Naive thymus-derived CD4-positive, alpha-beta T cell (primary cell): ENCODE measurements at regions of chr6 and their contacts with region 1.

Region 1: GRCh38 chr6:151390276-151391032 is 905 bp downstream of the ZBTB2 start:
- DNase-seq: peak; percentile 97 to 100 (median 99)
- ATAC-seq: peak; percentile 88
- H3K4me3 ChIP-seq: peak overlapping the region; percentile 60
- H3K4me3 Mint-ChIP-seq: peak overlapping the region; percentile 68 to 99 (median 94)
- H3K27ac ChIP-seq: peak overlapping the region; percentile 96
- H3K27ac Mint-ChIP-seq: peak overlapping the region; percentile 51 to 98 (median 94)
- H3K4me1 ChIP-seq: peaks cover 44 to 45% of the 10 kb centered on the region in 2 donors
- H3K4me1 Mint-ChIP-seq: peaks cover 39 to 74% (median 67%) of the 10 kb centered on the region in 7 donors
- H3K27me3 ChIP-seq: no peaks in the 10 kb centered on the region
- H3K27me3 Mint-ChIP-seq: peaks cover 0 to 4% (median 0%) of the 10 kb centered on the region in 5 donors

Region 2: DNA sequence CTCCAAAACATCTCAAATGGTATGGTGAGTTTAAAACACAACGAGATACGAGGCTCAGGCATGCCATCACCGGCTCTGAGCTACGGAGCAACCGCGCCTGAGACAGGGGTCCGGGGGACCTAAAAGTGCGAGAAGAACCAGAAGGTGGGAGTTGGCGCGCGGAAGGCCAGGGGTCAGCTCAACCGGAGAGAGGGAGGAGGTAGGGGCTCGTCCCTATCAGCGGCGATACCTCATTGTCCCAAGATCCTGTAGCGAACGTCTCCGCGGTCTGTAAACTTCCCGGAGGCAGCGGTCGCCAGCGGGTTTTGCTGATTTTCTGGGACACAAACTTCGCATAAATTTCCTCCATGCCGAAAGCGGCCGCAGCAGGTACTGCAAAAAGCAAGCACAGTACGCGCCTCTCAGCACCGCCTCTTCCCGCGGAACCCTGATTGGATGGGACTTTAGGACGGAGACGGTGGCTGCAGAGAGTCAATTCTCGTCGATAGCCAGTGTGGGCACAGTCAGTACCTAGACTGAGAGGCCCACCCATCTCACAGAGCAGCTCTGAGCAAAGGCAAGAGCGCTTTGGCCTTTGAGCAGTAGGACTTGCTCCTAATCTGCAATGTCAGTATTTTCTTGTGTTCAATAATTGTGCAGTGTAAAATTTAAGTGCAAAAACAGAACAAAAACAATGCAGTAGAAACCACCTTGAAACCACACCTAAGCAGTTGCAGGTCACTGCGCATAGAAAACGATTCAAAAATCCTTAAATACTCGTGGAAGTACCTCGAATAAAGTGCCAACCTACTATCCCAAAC is 1644.1 kb before region 1 on chr6 and contains the start of gene NUP43:
- CTCF ChIA-PET with region 1: no interaction called
- POLR2A ChIA-PET with region 1: no interaction called
- intact Hi-C with region 1: loop called in 1 of 2 experiments (anchors 2 kb)
- DNase-seq: peak; percentile 75 to 91 (median 90)
- ATAC-seq: peak; percentile 80
- H3K4me3 ChIP-seq: peak within 1 kb of the TSS; percentile 77
- H3K4me3 Mint-ChIP-seq: peak within 1 kb of the TSS; percentile 93 to 99 (median 97)
- H3K27ac ChIP-seq: peak within 1 kb of the TSS; percentile 82
- H3K27ac Mint-ChIP-seq: peak within 1 kb of the TSS; percentile 86 to 97 (median 95)
- H3K4me1 ChIP-seq: peaks cover 17 to 26% of the 10 kb centered on the region in 2 donors
- H3K4me1 Mint-ChIP-seq: peaks cover 14 to 46% (median 32%) of the 10 kb centered on the region in 7 donors
- H3K27me3 ChIP-seq: no peaks in the 10 kb centered on the region
- H3K27me3 Mint-ChIP-seq: no peaks in the 10 kb centered on the region
- total RNA-seq, gene NUP43: 14.0 to 70.7 (median 60.2) TPM

Region 3: GRCh38 chr6:151352410-151353396 is 37.8 kb before region 1 on chr6:
- CTCF ChIA-PET with region 1: no interaction called
- POLR2A ChIA-PET with region 1: interaction called, 19 read pairs
- intact Hi-C with region 1: loop called in 1 of 2 experiments (anchors 1 kb)
- DNase-seq: no peak
- ATAC-seq: peak; percentile 40
- H3K4me3 ChIP-seq: no peak overlapping the region
- H3K4me3 Mint-ChIP-seq: no peak overlapping the region
- H3K27ac ChIP-seq: no peak overlapping the region
- H3K27ac Mint-ChIP-seq: no peak overlapping the region
- H3K4me1 ChIP-seq: no peaks in the 10 kb centered on the region
- H3K4me1 Mint-ChIP-seq: peaks cover 0 to 6% (median 2%) of the 10 kb centered on the region in 7 donors
- H3K27me3 ChIP-seq: no peaks in the 10 kb centered on the region
- H3K27me3 Mint-ChIP-seq: no peaks in the 10 kb centered on the region

Region 4: GRCh38 chr6:151379933-151380847 is 10.3 kb before region 1 on chr6:
- CTCF ChIA-PET with region 1: interaction called, 3 read pairs
- POLR2A ChIA-PET with region 1: interaction called, 41 read pairs
- intact Hi-C with region 1: loop called (anchors 1 kb)
- DNase-seq: peak in 7 of 9 donors; percentile 14 to 50 (median 37)
- ATAC-seq: peak; percentile 84
- H3K4me3 ChIP-seq: peak overlapping the region; percentile 51
- H3K4me3 Mint-ChIP-seq: peak overlapping the region; percentile 82 to 91 (median 86)
- H3K27ac ChIP-seq: peak overlapping the region; percentile 70
- H3K27ac Mint-ChIP-seq: peak overlapping the region; percentile 87 to 97 (median 95)
- H3K4me1 ChIP-seq: peaks cover 28 to 47% of the 10 kb centered on the region in 2 donors
- H3K4me1 Mint-ChIP-seq: peaks cover 49 to 81% (median 72%) of the 10 kb centered on the region in 7 donors
- H3K27me3 ChIP-seq: no peaks in the 10 kb centered on the region
- H3K27me3 Mint-ChIP-seq: no peaks in the 10 kb centered on the region

Region 5: DNA sequence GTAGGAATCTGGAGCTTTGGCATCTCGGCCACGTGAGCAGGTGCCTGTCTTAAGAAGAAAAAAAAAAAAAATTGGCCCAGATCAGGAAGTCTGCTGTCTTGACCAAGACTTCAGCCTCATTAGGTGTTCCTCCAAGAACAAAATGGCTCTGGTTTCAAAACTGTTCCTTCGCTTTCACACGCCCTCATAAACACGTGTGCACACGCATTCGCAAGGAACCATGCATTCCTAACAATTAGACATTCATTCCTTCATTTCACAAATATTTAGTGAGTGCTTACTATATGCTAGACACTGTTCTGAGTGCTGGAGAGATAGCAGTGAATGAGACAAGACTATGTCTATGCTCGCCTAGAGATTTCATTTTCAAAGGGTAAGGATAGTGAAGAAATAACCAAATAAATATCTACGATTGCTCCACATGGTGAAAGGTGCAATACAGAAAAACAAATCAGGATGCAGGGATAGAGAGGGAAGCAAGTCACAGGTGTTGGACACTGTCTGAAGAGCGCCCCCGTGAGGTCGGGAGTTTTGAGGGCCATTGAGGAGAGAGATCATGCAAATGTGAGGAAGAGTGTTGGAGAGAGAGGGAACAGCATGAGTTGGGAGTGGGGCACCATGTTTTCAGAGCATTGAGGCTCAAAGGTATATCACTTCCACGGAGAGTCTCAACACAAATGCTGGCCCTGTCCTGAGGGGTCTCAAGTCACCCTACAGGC is 156.6 kb after region 1 on chr6:
- CTCF ChIA-PET with region 1: no interaction called
- POLR2A ChIA-PET with region 1: no interaction called
- intact Hi-C with region 1: no loop called
- DNase-seq: no peak
- ATAC-seq: no peak
- H3K4me3 ChIP-seq: no peak overlapping the region
- H3K4me3 Mint-ChIP-seq: no peak overlapping the region
- H3K27ac ChIP-seq: no peak overlapping the region
- H3K27ac Mint-ChIP-seq: no peak overlapping the region
- H3K4me1 ChIP-seq: no peaks in the 10 kb centered on the region
- H3K4me1 Mint-ChIP-seq: peaks cover 0 to 3% (median 0%) of the 10 kb centered on the region in 7 donors
- H3K27me3 ChIP-seq: no peaks in the 10 kb centered on the region
- H3K27me3 Mint-ChIP-seq: peaks cover 0 to 20% (median 10%) of the 10 kb centered on the region in 5 donors

Region 6: GRCh38 chr6:152184917-152185574 is 794.6 kb after region 1 on chr6:
- CTCF ChIA-PET with region 1: no interaction called
- POLR2A ChIA-PET with region 1: interaction called, 23 read pairs
- intact Hi-C with region 1: loop called (anchors 1 to 10 kb)
- DNase-seq: peak in 7 of 9 donors; percentile 25 to 78 (median 66)
- ATAC-seq: peak; percentile 77
- H3K4me3 ChIP-seq: peak overlapping the region; percentile 56
- H3K4me3 Mint-ChIP-seq: peak overlapping the region; percentile 87 to 99 (median 96)
- H3K27ac ChIP-seq: peak overlapping the region; percentile 71
- H3K27ac Mint-ChIP-seq: peak overlapping the region; percentile 95 to 100 (median 99)
- H3K4me1 ChIP-seq: peaks cover 37 to 48% of the 10 kb centered on the region in 2 donors
- H3K4me1 Mint-ChIP-seq: peaks cover 46 to 92% (median 75%) of the 10 kb centered on the region in 7 donors
- H3K27me3 ChIP-seq: no peaks in the 10 kb centered on the region
- H3K27me3 Mint-ChIP-seq: no peaks in the 10 kb centered on the region

Region 7: DNA sequence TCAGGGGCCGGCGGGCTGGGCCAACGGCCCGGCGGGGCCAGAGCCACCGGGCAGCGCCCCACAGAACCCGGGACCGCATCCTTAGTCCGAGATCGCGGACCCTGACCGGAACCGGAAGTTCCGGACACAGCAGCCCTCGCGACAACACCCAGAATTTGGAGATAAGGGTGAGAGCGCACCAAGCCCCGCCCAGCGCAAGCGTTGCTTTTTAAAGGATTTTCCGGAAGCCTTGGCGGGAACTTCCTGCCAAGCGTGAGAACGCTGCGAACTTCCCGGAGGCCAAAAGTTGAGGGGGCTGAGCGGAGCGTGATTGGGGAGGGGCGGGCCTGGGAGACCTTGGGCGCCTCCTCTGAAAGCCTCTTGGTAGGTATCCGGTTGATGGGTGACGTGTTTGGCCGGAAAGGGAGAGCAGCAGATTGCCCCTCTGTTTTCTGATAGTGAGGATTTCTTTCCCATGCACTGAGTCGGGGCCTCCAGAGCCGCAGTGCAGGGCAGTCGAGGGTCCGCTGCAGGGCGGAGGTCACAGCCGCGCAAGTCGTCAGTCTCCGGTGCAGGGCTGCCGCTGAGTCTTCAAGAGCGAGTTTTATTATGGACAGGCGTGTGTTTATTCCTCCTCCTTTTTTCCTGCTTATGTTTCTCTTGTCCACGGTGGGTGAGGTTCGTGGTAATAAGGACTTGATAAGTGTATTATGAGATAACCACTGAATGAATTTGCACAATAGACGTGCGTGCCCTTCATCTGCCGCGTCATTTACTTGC is 1612.3 kb after region 1 on chr6 and contains the start of gene MTRF1L:
- CTCF ChIA-PET with region 1: no interaction called
- POLR2A ChIA-PET with region 1: no interaction called
- intact Hi-C with region 1: loop called (anchors 5 kb)
- DNase-seq: peak; percentile 52 to 84 (median 70)
- ATAC-seq: peak; percentile 92
- H3K4me3 ChIP-seq: peak within 1 kb of the TSS; percentile 63
- H3K4me3 Mint-ChIP-seq: peak within 1 kb of the TSS; percentile 85 to 99 (median 96)
- H3K27ac ChIP-seq: peak within 1 kb of the TSS; percentile 73
- H3K27ac Mint-ChIP-seq: peak within 1 kb of the TSS; percentile 86 to 98 (median 93)
- H3K4me1 ChIP-seq: peaks cover 18% of the 10 kb centered on the region in 2 donors
- H3K4me1 Mint-ChIP-seq: peaks cover 24 to 59% (median 49%) of the 10 kb centered on the region in 7 donors
- H3K27me3 ChIP-seq: no peaks in the 10 kb centered on the region
- H3K27me3 Mint-ChIP-seq: peaks cover 0 to 18% (median 0%) of the 10 kb centered on the region in 5 donors
- total RNA-seq, gene MTRF1L: 8.9 to 18.1 (median 13.5) TPM